ENCODE measurements at regions of chr3 and their contacts with region 1.

Region 1: DNA sequence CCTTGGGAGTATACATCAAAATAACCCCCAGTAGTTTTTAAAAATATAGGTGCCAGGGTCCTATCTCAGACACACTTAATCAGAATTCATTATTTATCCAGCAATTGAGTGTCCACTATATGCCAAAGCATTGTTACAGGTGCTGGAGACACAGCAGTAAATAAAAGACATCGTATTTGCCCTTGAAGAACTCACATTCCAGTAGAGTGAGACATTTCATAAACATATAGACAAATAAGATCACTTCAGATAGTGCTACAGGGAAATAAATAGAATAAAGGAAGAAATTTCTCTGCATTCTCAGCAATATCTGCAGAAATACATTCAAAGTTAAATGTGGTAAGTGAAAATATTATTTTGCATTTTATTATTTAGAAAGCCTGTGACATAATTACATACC is 34.2 kb upstream of the ANKRD28 start:
- DNase-seq: no peak
- H3K4me3 ChIP-seq: no peak overlapping the region
- H3K27ac ChIP-seq: no peak overlapping the region
- H3K4me1 ChIP-seq: no peaks in the 10 kb centered on the region
- H3K27me3 ChIP-seq: no peaks in the 10 kb centered on the region
- CTCF ChIP-seq: no peak

Region 2: DNA sequence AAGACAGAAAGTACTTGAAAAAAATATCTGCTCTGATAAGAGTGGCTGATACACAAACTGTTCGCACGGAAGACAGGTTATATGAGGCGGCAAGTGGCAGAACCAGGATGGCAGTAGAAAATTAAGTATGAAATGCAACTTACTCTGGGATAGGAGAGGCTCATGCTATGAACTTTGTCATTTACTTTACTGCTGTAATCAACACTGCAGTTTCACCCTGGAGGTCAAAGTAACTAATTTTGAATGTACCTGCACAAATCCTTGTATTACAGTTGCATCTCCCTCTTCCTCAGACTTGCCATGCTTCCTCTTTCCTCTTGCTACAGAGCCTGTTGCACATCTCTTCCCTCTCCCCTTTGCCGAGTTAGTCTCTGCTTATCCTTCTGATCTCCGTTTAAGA is 269.4 kb before region 1 on chr3:
- intact Hi-C with region 1: no loop called
- DNase-seq: no peak
- H3K4me3 ChIP-seq: no peak overlapping the region
- H3K27ac ChIP-seq: no peak overlapping the region
- H3K4me1 ChIP-seq: no peaks in the 10 kb centered on the region
- H3K27me3 ChIP-seq: no peaks in the 10 kb centered on the region
- CTCF ChIP-seq: no peak

Region 3: GRCh38 chr3:16012086-16012485 is 180.2 kb after region 1 on chr3:
- intact Hi-C with region 1: loop called (anchors 10 kb)
- DNase-seq: no peak
- H3K4me3 ChIP-seq: no peak overlapping the region
- H3K27ac ChIP-seq: no peak overlapping the region
- H3K4me1 ChIP-seq: no peaks in the 10 kb centered on the region
- H3K27me3 ChIP-seq: no peaks in the 10 kb centered on the region
- CTCF ChIP-seq: no peak

Measured in left ventricle myocardium inferior (tissue), 1 donor.